ENCODE measurements at regions of chr1 and their contacts with region 1.

Region 1: DNA sequence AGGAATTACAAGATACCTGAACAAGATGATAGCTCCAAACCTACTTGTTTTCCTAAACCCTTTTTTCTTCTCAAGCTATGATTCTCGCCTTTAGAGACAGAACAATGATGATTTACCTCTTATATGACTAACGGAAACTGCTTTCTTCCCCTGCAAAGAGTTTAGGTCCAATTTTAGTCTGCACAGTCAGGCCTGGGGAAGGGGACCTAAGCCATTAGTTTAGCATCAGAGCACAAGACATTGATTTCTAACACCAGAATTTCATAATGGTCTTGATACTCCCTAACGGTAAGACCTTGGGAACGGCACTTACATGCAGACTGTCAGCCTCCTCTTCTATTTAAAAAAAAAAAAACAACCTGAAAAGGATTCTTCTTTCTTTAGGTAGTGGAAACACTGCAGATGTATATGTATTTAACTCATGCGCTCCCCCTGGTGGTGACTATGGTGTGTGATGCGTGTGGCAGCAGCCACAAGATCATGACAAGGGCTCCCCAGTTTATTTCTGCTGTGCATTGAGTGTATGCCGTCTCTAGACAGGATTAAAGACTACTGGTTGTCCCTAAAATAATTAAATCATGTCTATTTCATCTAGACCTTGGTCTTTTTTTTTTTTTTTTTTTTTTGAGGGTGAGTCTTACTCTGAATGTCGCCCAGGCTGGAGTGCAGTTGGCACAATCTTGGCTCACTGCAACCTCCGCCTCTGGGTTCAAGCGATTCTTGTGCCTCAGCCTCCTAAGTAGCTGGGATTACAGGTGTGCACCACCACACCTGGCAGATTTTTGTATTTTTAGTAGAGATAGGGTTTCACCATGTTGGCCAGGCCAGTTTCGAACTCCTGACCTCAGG is 37.3 kb upstream of the TMEM222 start:
- DNase-seq: peak; percentile 95
- ATAC-seq: peak; percentile 89

Region 2: DNA sequence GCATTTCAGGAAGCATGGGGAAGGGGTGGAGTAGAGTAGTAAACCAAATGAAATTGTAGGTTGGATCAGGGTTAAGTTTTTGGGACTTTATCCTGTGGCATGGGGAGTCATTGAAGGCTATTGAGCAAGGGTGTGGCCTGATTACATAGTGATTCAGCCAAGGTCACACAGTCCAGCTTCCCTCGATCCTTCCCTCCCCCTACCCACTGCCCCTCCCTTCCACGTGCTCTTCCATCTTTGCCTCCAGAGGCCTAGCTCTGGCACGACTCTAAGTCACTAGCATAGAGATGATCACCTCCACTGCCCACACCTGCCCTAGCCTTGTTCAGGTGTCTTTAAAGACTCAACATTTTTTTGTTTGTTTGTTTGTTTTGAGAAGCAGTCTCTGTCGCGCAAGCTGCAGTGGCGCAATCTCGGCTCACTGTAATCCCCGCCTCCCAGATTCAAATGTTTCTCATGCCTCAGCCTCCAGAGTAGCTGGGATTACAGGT is 92.6 kb before region 1 on chr1:
- intact Hi-C with region 1: loop called (anchors 10 kb)
- DNase-seq: no peak
- ATAC-seq: no peak